Activated CD4-positive, alpha-beta memory T cell treated with anti-CD3 and anti-CD28 coated beads for 36 hours (primary cell): ENCODE measurements at regions of chr4 and their contacts with region 1.

Region 1: DNA sequence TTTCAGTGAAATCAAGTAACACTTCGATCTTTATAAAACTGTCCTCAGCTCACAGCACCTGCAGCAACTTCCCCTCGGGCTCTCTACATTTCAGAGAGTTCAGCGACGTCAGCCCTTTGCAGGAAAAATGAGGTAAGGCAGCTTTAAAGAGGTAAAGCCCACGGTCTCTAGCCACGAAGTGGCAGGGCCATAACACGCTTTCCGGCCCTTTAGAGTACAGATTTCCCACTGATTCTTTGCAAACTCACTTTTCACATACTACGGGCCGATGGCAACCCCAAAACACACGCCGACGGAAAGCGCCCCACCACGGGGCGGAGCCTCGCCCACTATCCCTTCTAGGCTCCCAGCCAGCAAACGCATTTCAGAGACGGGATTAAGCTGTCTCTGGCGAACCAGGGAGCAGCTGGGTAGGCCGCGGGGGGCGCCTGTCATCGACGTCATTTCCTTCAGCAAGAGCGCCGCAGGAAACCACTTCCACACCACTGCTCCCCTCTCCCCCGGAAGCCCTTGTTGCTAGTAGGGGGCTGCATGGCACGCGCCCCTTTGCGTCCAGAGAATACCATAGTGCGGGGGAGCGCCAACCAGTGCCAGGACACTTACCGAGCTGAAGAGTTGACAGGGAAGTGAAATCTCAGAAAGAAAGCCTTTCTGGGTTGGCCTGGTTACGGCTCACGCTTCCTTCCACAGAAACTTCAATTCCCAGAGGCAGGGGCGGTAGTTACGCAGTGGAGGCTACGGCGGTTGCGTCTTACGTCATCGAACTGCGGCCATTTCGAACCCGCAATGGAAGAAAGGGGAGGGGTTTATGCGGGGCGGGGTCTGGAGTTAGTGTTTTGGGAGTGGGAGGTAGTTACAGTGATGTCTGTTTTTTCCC is at the start of gene TRMT10A:
- DNase-seq: peak; percentile 98
- H3K4me3 Mint-ChIP-seq: peak within 1 kb of the TSS; percentile 93
- H3K27ac Mint-ChIP-seq: peak within 1 kb of the TSS; percentile 98
- H3K4me1 Mint-ChIP-seq: peaks cover 6% of the 10 kb centered on the region
- H3K27me3 Mint-ChIP-seq: peaks cover 7% of the 10 kb centered on the region
- total RNA-seq, gene TRMT10A: 5.6 to 8.9 TPM

Region 2: DNA sequence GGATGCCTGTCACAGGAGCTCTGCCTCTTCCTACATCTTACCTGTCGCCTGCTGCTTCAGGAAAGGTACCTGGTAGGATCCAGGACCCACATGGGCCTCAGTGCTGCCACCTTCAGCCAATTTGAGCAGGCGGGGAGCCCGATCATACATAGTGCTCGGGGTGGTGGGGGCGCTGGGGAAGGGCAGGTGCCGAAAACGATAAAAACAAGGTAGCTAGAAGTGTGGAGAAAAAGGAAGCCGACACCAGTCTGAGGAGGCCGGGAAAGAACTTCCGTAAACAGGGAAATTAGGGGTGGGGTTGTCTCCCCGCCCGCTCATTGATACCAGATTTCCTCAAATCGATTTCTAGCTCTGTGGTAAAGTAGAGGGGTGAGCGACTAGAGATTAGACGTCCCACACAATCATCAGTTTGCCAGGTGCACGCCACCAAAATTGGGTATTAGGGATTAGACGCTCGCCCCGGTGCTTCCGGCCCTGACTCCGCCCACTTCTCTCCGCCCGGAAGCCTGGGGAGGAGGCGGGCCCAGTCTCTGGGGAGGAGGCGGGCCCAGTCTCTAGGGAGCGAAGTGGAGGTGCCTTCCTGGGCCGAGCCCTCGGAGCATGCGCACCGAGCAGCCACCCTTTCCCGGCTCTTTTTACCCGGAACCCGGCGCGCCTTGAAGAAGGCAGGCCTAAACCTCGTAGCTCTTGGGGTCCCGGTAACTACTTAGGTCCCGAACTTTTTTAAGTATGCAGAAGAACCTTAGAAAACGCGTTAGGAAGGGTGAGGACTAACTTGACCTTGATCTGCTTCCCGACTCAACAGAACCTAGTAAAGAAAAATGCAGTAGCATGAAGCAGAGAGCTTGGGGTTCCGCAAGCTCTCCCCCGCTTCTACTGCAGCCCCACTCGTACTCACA is 1420.3 kb before region 1 on chr4 and contains the start of gene STPG2:
- CTCF ChIA-PET with region 1: no interaction called
- POLR2A ChIA-PET with region 1: no interaction called
- intact Hi-C with region 1: loop called (anchors 5 kb)
- DNase-seq: peak; percentile 95
- H3K4me3 Mint-ChIP-seq: peak within 1 kb of the TSS; percentile 95
- H3K27ac Mint-ChIP-seq: peak within 1 kb of the TSS; percentile 98
- H3K4me1 Mint-ChIP-seq: peaks cover 20% of the 10 kb centered on the region
- H3K27me3 Mint-ChIP-seq: no peaks in the 10 kb centered on the region
- total RNA-seq, gene STPG2: not detected

Region 3: DNA sequence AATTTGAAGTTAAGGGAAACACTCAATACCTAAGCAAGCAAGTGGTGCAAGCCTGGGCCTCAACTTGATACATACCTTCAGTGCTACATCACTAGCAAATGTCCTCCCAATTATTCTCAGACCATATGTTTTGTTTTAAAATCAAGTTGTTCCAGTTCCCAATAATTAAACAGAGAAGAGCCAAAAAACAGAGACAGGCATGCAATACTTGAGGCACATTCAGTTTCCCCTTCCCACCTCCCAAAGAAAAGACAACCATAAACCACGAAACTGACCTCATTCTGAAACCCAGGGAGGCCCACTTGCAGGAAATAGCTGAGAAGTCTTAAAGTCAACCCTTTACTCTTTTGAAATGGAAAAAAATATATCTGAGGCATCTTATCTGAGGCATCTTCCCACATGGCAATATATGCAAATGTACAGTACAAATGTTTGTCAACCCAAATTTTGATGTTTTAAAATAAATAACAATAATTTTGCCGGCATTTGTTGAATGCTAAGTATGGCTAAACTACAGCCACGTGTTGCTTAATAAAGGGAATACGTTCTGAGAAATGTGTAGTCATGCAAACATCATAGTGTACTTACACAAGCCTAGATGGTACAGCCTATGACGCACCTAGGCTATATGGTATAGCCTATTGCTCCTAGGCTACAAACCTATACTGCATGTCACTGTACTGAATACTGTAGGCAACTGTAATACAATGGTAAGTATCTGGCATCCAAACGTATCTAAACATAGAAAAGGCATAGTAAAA is 1052.6 kb before region 1 on chr4:
- CTCF ChIA-PET with region 1: no interaction called
- POLR2A ChIA-PET with region 1: no interaction called
- intact Hi-C with region 1: no loop called
- DNase-seq: peak; percentile 69
- H3K4me3 Mint-ChIP-seq: no peak overlapping the region
- H3K27ac Mint-ChIP-seq: peak overlapping the region; percentile 24
- H3K4me1 Mint-ChIP-seq: peaks cover 55% of the 10 kb centered on the region
- H3K27me3 Mint-ChIP-seq: no peaks in the 10 kb centered on the region

Region 4: GRCh38 chr4:99088481-99089365 is 474.8 kb before region 1 on chr4 and contains the start of gene ADH5:
- CTCF ChIA-PET with region 1: no interaction called
- POLR2A ChIA-PET with region 1: interaction called, 4 read pairs
- intact Hi-C with region 1: loop called (anchors 1 kb)
- DNase-seq: peak; percentile 95
- H3K4me3 Mint-ChIP-seq: peak within 1 kb of the TSS; percentile 96
- H3K27ac Mint-ChIP-seq: peak within 1 kb of the TSS; percentile 93
- H3K4me1 Mint-ChIP-seq: peaks cover 37% of the 10 kb centered on the region
- H3K27me3 Mint-ChIP-seq: no peaks in the 10 kb centered on the region
- total RNA-seq, gene ADH5: 112 to 119 TPM

Region 5: DNA sequence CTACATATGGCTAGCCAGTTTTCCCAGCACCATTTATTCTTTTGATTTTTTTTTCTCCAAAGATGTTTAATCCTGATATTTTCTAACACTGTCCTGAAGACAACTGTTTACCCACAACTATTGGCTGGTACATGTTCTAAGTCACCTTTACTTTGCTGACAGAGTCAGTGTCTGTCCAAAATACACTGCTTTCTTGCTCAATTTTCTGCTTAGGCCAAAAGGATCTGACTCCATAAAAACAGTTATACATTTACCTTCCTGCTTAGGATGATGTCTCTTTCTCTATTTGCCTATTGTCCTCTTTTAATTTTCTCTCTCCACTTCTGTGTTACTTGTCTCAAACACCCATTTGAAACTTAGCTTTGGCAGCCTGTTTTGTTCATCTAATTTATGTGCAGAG is 214.2 kb before region 1 on chr4:
- CTCF ChIA-PET with region 1: no interaction called
- POLR2A ChIA-PET with region 1: no interaction called
- intact Hi-C with region 1: no loop called
- DNase-seq: no peak
- H3K4me3 Mint-ChIP-seq: no peak overlapping the region
- H3K27ac Mint-ChIP-seq: no peak overlapping the region
- H3K4me1 Mint-ChIP-seq: no peaks in the 10 kb centered on the region
- H3K27me3 Mint-ChIP-seq: peaks cover 4% of the 10 kb centered on the region

Region 6: DNA sequence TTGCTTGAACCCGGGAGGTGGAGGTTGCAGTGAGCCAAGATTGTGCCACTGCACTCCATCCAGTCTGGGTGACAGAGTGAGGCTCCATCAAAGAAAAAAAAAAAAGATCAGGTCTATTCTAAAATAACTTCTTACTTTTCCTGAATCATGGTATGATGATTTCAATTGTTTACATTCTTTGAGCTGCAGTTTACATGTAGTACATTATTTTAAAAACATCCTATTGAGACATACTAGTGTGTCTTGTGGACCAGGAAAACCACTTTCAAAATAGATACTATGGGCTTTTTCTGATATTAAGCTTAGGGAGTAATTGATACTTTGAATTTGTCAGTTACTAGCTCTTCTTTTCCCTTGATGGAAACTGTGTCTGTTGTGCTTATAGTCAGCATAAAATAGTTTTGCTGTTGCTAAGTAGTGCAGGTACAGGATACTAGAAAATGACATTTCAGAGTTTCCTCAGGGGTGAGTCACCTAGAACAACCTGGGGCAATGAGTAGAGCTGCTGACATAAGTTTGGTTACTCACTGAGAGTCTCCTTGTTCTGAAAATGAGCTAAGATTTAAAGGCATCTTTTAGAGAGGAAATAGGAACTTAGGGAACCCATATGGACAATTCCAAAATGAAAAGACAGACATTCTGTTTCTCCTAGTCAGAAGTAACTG is 147.3 kb after region 1 on chr4:
- CTCF ChIA-PET with region 1: no interaction called
- POLR2A ChIA-PET with region 1: no interaction called
- intact Hi-C with region 1: loop called (anchors 5 kb)
- DNase-seq: no peak
- H3K4me3 Mint-ChIP-seq: no peak overlapping the region
- H3K27ac Mint-ChIP-seq: no peak overlapping the region
- H3K4me1 Mint-ChIP-seq: peaks cover 8% of the 10 kb centered on the region
- H3K27me3 Mint-ChIP-seq: peaks cover 4% of the 10 kb centered on the region

Region 7: DNA sequence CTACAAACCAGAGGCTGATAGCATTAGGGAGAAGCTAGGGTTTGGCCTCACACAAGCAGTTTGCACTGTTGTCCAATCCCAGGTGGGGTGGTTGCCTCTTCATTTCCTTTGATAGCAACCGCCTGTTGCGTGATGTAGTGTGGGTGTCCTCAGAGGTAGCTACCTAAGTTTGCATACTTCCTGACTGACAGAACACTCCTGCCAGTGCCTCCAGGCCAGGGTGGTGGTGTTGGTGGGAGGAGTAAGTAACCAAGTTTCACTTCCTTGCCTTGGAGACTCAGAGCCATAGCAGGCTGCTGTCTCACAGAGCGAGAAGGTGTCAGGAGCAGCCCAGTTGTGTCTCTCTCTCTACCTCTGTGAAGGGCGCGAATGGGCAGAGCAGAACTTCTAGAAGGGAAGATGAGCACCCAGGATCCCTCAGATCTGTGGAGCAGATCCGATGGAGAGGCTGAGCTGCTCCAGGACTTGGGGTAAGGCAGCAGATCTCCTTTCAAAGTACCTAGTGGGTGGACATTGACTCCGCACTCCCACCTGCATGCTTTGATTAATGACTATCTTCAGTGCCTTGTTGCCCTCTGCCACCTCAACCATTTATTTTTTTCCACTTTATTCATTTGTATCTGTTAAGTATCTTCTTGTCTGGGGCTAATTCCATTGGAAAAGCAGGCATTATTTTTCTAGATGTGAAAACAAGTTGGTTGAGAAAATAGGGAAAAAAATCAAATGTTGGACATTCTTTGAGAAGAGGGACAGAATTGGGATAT is 253.2 kb after region 1 on chr4 and contains the start of gene DAPP1:
- CTCF ChIA-PET with region 1: interaction called, 13 read pairs
- POLR2A ChIA-PET with region 1: interaction called, 6 read pairs
- intact Hi-C with region 1: loop called (anchors 1 kb)
- DNase-seq: peak; percentile 89
- H3K4me3 Mint-ChIP-seq: peak within 1 kb of the TSS; percentile 81
- H3K27ac Mint-ChIP-seq: peak within 1 kb of the TSS; percentile 93
- H3K4me1 Mint-ChIP-seq: peaks cover 64% of the 10 kb centered on the region
- H3K27me3 Mint-ChIP-seq: no peaks in the 10 kb centered on the region
- total RNA-seq, gene DAPP1: 23.6 TPM

Region 8: DNA sequence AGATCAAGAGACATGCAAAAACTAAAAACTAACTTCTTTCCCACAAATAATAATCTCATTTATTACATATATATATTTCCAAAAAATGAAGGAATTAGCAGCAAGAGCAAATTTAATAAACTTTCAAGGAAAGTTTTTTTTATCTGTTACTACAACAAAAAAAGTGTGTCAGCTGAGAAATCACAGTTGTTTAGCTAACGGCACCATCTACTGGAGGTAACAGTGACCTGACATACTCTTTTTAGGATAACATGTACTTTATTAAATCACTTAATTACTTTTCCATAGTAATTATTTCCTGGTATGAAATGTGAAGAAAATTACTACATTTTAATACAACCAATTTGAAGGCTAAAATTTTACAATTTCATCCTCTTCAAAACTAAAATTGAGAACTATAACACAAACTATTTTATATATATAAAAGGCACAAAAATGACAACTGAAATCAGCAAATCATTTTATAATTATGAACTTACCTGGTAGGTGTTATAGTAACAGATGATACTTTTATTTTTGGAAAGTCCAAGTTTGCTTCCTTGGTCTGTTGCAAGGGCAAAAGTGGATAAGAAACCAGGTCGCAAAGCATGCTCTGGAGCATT is 321.6 kb after region 1 on chr4:
- CTCF ChIA-PET with region 1: interaction called, 5 read pairs
- POLR2A ChIA-PET with region 1: no interaction called
- intact Hi-C with region 1: loop called (anchors 1 kb)
- DNase-seq: peak; percentile 19
- H3K4me3 Mint-ChIP-seq: no peak overlapping the region
- H3K27ac Mint-ChIP-seq: no peak overlapping the region
- H3K4me1 Mint-ChIP-seq: peaks cover 6% of the 10 kb centered on the region
- H3K27me3 Mint-ChIP-seq: no peaks in the 10 kb centered on the region